SK-N-SH (cell line): ENCODE measurements at regions of chr1 and their contacts with region 1.

Region 1: GRCh38 chr1:219812491-219813203 is 115.7 kb downstream of the SLC30A10 start:
- DNase-seq: peak; percentile 67
- H3K4me3 ChIP-seq: peak overlapping the region in 1 of 2 experiments; percentile 14; a peak in 1 of 4 replicates
- H3K27ac ChIP-seq: peak overlapping the region in 1 of 2 experiments; percentile 32; a peak in 2 of 4 replicates
- H3K4me1 ChIP-seq: peaks cover 4 to 5% of the 10 kb centered on the region in 2 experiments
- H3K27me3 ChIP-seq: no peaks in the 10 kb centered on the region
- CTCF ChIP-seq: peak; percentile 97
- EP300 ChIP-seq: peak in 1 of 2 experiments; percentile 27; a peak in 1 of 4 replicates
- RAD21 ChIP-seq: peak; percentile 100

Region 2: DNA sequence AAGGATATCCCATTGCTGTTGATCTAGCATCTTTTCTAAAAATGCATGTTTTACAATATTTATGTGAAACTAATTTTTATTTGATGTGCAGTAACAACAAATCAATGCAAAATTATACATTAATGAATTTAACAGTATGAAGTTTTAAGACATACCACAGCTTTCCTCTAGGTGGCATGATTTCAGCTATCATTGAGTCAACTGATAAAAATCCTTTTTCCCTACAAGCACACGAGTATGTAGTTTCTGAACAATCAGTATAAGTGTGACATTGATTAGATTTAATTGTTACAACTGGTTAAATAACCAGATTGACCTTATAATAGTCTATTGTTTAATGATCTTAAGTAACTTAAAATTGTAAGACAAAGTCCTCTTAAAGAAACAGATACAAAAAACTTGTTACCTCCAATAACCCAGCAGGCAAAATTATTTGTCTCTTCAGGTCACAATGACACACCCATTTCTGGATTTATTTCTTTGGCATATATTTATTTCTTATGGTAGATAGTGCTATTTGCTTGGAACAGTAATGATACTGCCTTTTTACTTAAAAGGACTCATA is 1473.3 kb before region 1 on chr1:
- CTCF ChIA-PET with region 1: interaction called, 16 read pairs
- POLR2A ChIA-PET with region 1: no interaction called
- DNase-seq: no peak
- H3K4me3 ChIP-seq: no peak overlapping the region; a peak in 1 of 4 replicates
- H3K27ac ChIP-seq: peak overlapping the region in 1 of 2 experiments; percentile 6; a peak in 1 of 4 replicates
- H3K4me1 ChIP-seq: peaks cover 0 to 11% of the 10 kb centered on the region in 2 experiments; a peak in 2 of 4 replicates
- H3K27me3 ChIP-seq: no peaks in the 10 kb centered on the region
- CTCF ChIP-seq: peak; percentile 83
- EP300 ChIP-seq: no peak
- RAD21 ChIP-seq: peak; percentile 80

Region 3: GRCh38 chr1:219566951-219567947 is 245.4 kb before region 1 on chr1:
- CTCF ChIA-PET with region 1: interaction called, 53 read pairs
- POLR2A ChIA-PET with region 1: interaction called, 3 read pairs
- DNase-seq: peak; percentile 26
- H3K4me3 ChIP-seq: no peak overlapping the region; a peak in 1 of 4 replicates
- H3K27ac ChIP-seq: peak overlapping the region in 1 of 2 experiments; percentile 32; a peak in 2 of 4 replicates
- H3K4me1 ChIP-seq: peaks cover 5 to 6% of the 10 kb centered on the region in 2 experiments; a peak in 2 of 4 replicates
- H3K27me3 ChIP-seq: no peaks in the 10 kb centered on the region
- CTCF ChIP-seq: peak; percentile 87
- EP300 ChIP-seq: peak in 1 of 2 experiments; percentile 38; a peak in 1 of 4 replicates
- RAD21 ChIP-seq: peak; percentile 95

Region 4: GRCh38 chr1:219687779-219688178 is 124.9 kb before region 1 on chr1:
- CTCF ChIA-PET with region 1: no interaction called
- POLR2A ChIA-PET with region 1: no interaction called
- DNase-seq: no peak
- H3K4me3 ChIP-seq: no peak overlapping the region
- H3K27ac ChIP-seq: no peak overlapping the region
- H3K4me1 ChIP-seq: no peaks in the 10 kb centered on the region; a peak in 1 of 4 replicates
- H3K27me3 ChIP-seq: no peaks in the 10 kb centered on the region
- CTCF ChIP-seq: no peak
- EP300 ChIP-seq: no peak
- RAD21 ChIP-seq: no peak

Region 5: GRCh38 chr1:219798283-219799030 is 14.2 kb before region 1 on chr1:
- CTCF ChIA-PET with region 1: interaction called, 32 read pairs
- POLR2A ChIA-PET with region 1: no interaction called
- DNase-seq: no peak
- H3K4me3 ChIP-seq: no peak overlapping the region
- H3K27ac ChIP-seq: peak overlapping the region in 1 of 2 experiments; percentile 94; a peak in 2 of 4 replicates
- H3K4me1 ChIP-seq: peaks cover 0 to 13% of the 10 kb centered on the region in 2 experiments; a peak in 3 of 4 replicates
- H3K27me3 ChIP-seq: no peaks in the 10 kb centered on the region
- CTCF ChIP-seq: no peak
- EP300 ChIP-seq: peak in 1 of 2 experiments; percentile 57; a peak in 2 of 4 replicates
- RAD21 ChIP-seq: no peak

Region 6: DNA sequence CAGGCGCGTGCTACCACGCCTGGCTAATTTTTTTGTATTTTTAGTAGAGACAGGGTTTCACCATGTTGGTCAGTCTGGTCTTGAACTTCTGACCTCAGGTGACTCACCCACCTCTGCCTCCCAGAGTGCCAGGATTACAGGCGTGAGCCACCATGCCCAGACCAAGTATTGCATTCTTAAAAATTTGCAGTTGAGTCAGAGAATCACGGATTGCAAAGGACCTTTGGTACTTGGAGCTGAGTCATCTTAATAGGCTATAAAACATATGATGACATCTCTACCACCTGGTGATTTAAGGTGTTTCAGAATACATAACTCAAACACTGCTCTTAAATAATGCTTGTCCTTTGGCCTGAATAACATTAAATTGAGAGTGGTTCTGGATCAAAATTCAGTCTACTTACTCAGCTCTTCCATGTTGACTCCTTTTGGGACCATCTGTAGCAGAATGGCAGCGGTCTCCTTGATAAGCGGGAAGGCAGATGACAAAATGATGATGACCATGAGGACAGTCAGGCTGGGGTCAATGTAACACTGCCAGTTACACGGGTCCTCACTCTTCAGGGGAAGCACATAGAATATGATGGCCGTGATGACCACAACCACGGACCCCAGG is 105.3 kb after region 1 on chr1:
- CTCF ChIA-PET with region 1: no interaction called
- POLR2A ChIA-PET with region 1: no interaction called
- DNase-seq: no peak
- H3K4me3 ChIP-seq: no peak overlapping the region
- H3K27ac ChIP-seq: no peak overlapping the region
- H3K4me1 ChIP-seq: no peaks in the 10 kb centered on the region
- H3K27me3 ChIP-seq: no peaks in the 10 kb centered on the region; the same call in 1 of the 2 replicates
- CTCF ChIP-seq: no peak
- EP300 ChIP-seq: no peak
- RAD21 ChIP-seq: no peak

Region 7: DNA sequence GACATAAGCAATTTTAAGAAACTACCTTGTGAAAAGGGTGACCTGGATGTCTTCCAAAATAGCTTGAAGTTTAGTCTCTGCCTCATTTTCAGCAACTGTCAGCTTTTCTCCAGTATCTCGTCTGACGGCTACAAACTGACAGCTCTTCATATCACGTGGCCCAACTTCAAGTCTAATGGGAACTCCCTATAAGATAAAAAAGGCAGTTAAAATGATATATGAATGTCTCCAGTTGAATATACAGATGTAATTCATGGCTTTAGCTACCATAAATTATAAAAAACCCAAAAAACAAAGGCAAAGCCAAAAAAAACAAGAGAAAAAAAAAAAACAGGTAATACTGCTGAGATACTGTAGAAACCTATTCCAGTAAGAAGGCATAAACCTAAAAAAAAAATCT is 160.6 kb after region 1 on chr1:
- CTCF ChIA-PET with region 1: no interaction called
- POLR2A ChIA-PET with region 1: no interaction called
- DNase-seq: no peak
- H3K4me3 ChIP-seq: no peak overlapping the region
- H3K27ac ChIP-seq: no peak overlapping the region; a peak in 1 of 4 replicates
- H3K4me1 ChIP-seq: peaks cover 0 to 2% of the 10 kb centered on the region in 2 experiments; a peak in 1 of 4 replicates
- H3K27me3 ChIP-seq: no peaks in the 10 kb centered on the region
- CTCF ChIP-seq: no peak
- EP300 ChIP-seq: no peak
- RAD21 ChIP-seq: no peak